Naive thymus-derived CD4-positive, alpha-beta T cell (primary cell): ENCODE measurements at regions of chr2 and their contacts with region 1.

Region 1: DNA sequence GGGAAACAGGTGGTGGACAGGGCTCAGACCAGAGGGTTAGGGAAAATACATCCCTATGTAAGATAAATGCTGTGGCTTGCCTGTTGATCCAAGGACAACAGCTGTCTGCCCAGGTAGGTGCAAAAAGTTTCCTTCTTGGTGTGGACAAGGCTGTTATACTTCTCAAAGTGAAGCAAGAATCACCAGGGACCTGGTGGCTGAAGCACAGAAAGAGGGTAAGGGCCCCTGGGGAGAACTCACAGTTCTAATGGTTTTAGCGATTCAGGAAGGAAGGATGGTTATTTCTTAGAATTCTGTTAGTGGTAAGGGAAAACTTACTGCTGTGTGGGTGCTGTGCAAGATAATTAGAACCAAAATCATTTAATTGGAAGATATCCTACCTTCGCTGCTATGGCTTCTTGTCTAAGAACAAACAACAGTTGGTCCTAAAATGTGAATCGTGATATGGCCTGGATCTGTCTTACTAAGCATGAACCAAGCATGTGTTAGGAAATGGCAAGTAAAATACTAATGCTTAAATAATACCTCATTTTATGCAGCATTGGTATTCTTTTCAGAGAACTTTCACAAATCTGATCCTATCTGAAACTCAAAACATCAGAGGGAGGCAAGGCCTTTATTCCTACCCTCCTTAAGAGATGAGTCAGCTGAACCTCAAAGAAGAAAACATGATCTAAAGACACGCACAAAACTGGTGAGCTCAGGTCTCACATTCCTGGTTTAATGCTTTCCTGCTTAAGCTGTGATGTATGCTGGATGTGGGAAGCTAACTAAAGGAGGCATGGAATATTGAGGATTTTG is 159.2 kb upstream of the THUMPD2 start:
- DNase-seq: no peak
- ATAC-seq: no peak
- H3K4me3 ChIP-seq: no peak overlapping the region
- H3K4me3 Mint-ChIP-seq: peak overlapping the region in 1 of 10 donors; percentile 82
- H3K27ac ChIP-seq: no peak overlapping the region
- H3K27ac Mint-ChIP-seq: peak overlapping the region in 1 of 9 donors; percentile 92
- H3K4me1 ChIP-seq: no peaks in the 10 kb centered on the region
- H3K4me1 Mint-ChIP-seq: peaks cover 0 to 58% (median 0%) of the 10 kb centered on the region in 7 donors
- H3K27me3 ChIP-seq: no peaks in the 10 kb centered on the region
- H3K27me3 Mint-ChIP-seq: peaks cover 0 to 2% (median 0%) of the 10 kb centered on the region in 5 donors

Region 2: DNA sequence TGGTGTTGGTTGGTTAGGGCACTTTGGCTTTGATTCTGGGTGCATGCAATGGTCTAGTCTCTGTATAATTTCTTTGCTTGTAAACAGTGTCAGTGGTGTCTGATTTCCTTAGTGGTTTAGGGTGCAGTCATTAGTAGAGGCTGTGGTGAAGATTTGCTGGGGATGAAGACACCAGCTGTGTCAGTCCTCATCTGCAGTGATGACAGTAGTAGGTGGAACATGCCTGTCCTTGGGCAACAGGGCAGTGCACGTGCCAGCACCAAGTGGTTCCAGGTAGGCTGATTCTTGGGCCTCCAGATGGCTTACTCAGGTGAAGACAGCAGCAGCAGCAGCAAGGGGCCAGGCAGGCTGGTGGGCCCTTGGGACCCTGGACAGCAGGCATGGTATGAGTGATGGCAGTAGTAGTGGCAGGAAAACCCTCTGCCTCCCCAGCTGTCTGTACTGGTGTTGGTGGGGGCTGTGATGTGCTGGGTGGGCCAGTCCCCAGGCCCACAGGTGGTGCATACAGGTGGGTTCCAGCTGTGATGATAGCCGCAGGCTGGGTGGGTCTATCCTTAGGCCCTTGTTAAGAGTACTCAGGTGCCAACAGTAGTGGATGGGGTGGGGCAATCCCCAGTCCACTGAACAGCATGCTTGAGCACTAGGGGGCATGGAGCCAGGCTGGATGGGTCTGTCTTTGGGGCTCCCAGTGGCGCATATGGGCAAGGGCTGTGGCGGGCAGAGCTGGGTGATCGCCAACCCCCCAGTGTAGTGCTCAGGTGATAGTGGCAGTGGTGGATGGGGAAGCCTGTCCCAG is 18.5 kb before region 1 on chr2:
- CTCF ChIA-PET with region 1: no interaction called
- POLR2A ChIA-PET with region 1: no interaction called
- intact Hi-C with region 1: loop called in 1 of 2 experiments (anchors 2 kb)
- DNase-seq: peak in 1 of 9 donors; percentile 29
- ATAC-seq: no peak
- H3K4me3 ChIP-seq: no peak overlapping the region
- H3K4me3 Mint-ChIP-seq: peak overlapping the region in 1 of 10 donors; percentile 89
- H3K27ac ChIP-seq: no peak overlapping the region
- H3K27ac Mint-ChIP-seq: peak overlapping the region in 1 of 9 donors; percentile 86
- H3K4me1 ChIP-seq: no peaks in the 10 kb centered on the region
- H3K4me1 Mint-ChIP-seq: peaks cover 0 to 72% (median 0%) of the 10 kb centered on the region in 7 donors
- H3K27me3 ChIP-seq: no peaks in the 10 kb centered on the region
- H3K27me3 Mint-ChIP-seq: peaks cover 0 to 17% (median 11%) of the 10 kb centered on the region in 5 donors

Region 3: DNA sequence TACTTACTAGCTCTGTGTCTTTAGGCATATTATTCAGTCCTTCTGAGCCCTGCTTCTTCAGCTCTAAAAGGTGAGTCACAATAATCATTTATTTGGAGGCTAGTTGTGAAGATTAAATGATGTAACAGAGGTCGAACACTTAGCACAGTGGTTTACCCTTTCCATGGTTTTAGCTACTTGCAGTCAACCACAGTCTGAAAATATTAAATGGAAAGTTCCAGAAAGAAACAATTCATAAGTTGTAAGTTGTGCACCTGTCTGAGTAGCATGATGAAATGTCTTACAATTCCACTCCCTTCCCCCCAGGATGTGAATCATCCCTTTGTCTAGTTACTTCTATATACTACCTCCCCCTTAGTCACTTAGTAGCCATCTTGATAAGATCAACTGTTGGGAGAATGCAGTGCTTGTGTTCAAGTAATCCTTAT is 58.4 kb after region 1 on chr2:
- CTCF ChIA-PET with region 1: no interaction called
- POLR2A ChIA-PET with region 1: no interaction called
- intact Hi-C with region 1: loop called in 1 of 2 experiments (anchors 5 kb)
- DNase-seq: no peak
- ATAC-seq: no peak
- H3K4me3 ChIP-seq: no peak overlapping the region
- H3K4me3 Mint-ChIP-seq: no peak overlapping the region
- H3K27ac ChIP-seq: no peak overlapping the region
- H3K27ac Mint-ChIP-seq: no peak overlapping the region
- H3K4me1 ChIP-seq: no peaks in the 10 kb centered on the region
- H3K4me1 Mint-ChIP-seq: peaks cover 0 to 29% (median 0%) of the 10 kb centered on the region in 7 donors
- H3K27me3 ChIP-seq: no peaks in the 10 kb centered on the region
- H3K27me3 Mint-ChIP-seq: peaks cover 0 to 14% (median 0%) of the 10 kb centered on the region in 5 donors

Region 4: GRCh38 chr2:40072442-40073232 is 134.4 kb after region 1 on chr2:
- CTCF ChIA-PET with region 1: no interaction called
- POLR2A ChIA-PET with region 1: no interaction called
- intact Hi-C with region 1: no loop called
- DNase-seq: no peak
- ATAC-seq: no peak
- H3K4me3 ChIP-seq: no peak overlapping the region
- H3K4me3 Mint-ChIP-seq: no peak overlapping the region
- H3K27ac ChIP-seq: no peak overlapping the region
- H3K27ac Mint-ChIP-seq: no peak overlapping the region
- H3K4me1 ChIP-seq: no peaks in the 10 kb centered on the region
- H3K4me1 Mint-ChIP-seq: no peaks in the 10 kb centered on the region
- H3K27me3 ChIP-seq: no peaks in the 10 kb centered on the region
- H3K27me3 Mint-ChIP-seq: no peaks in the 10 kb centered on the region